ENCODE measurements at regions of chr2 and their contacts with region 1.

Region 1: GRCh38 chr2:60998628-60999545 is 18.6 kb upstream of the PEX13 start:
- DNase-seq: peak; percentile 79
- ATAC-seq: peak; percentile 69
- H3K4me3 ChIP-seq: no peak overlapping the region
- H3K4me3 Mint-ChIP-seq: no peak overlapping the region
- H3K27ac ChIP-seq: no peak overlapping the region
- H3K27ac Mint-ChIP-seq: peak overlapping the region; percentile 65
- H3K4me1 ChIP-seq: peaks cover 31 to 34% of the 10 kb centered on the region in 2 donors
- H3K4me1 Mint-ChIP-seq: peaks cover 42% of the 10 kb centered on the region
- H3K27me3 ChIP-seq: no peaks in the 10 kb centered on the region
- H3K27me3 Mint-ChIP-seq: no peaks in the 10 kb centered on the region
- CTCF ChIP-seq: peak; percentile 89

Region 2: GRCh38 chr2:60794277-60794863 is 204.5 kb before region 1 on chr2:
- CTCF ChIA-PET with region 1: interaction called, 60 read pairs
- POLR2A ChIA-PET with region 1: interaction called, 3 read pairs
- intact Hi-C with region 1: loop called (anchors 1 kb)
- DNase-seq: peak; percentile 66
- ATAC-seq: no peak
- H3K4me3 ChIP-seq: no peak overlapping the region
- H3K4me3 Mint-ChIP-seq: no peak overlapping the region
- H3K27ac ChIP-seq: peak overlapping the region in 1 of 2 donors; percentile 23
- H3K27ac Mint-ChIP-seq: no peak overlapping the region
- H3K4me1 ChIP-seq: peaks cover 15 to 20% of the 10 kb centered on the region in 2 donors
- H3K4me1 Mint-ChIP-seq: peaks cover 28% of the 10 kb centered on the region
- H3K27me3 ChIP-seq: no peaks in the 10 kb centered on the region
- H3K27me3 Mint-ChIP-seq: no peaks in the 10 kb centered on the region
- CTCF ChIP-seq: peak; percentile 84

Region 3: GRCh38 chr2:60891180-60891579 is 107.7 kb before region 1 on chr2:
- CTCF ChIA-PET with region 1: interaction called, 10 read pairs
- POLR2A ChIA-PET with region 1: no interaction called
- intact Hi-C with region 1: no loop called
- DNase-seq: no peak
- ATAC-seq: no peak
- H3K4me3 ChIP-seq: no peak overlapping the region
- H3K4me3 Mint-ChIP-seq: no peak overlapping the region
- H3K27ac ChIP-seq: peak overlapping the region in 1 of 2 donors; percentile 33
- H3K27ac Mint-ChIP-seq: no peak overlapping the region
- H3K4me1 ChIP-seq: peaks cover 26 to 53% of the 10 kb centered on the region in 2 donors
- H3K4me1 Mint-ChIP-seq: peaks cover 50% of the 10 kb centered on the region
- H3K27me3 ChIP-seq: no peaks in the 10 kb centered on the region
- H3K27me3 Mint-ChIP-seq: no peaks in the 10 kb centered on the region
- CTCF ChIP-seq: no peak

Region 4: GRCh38 chr2:60926737-60927552 is 71.9 kb before region 1 on chr2:
- CTCF ChIA-PET with region 1: interaction called, 27 read pairs
- POLR2A ChIA-PET with region 1: interaction called, 4 read pairs
- intact Hi-C with region 1: loop called (anchors 1 kb)
- DNase-seq: peak; percentile 60
- ATAC-seq: peak; percentile 39
- H3K4me3 ChIP-seq: no peak overlapping the region
- H3K4me3 Mint-ChIP-seq: peak overlapping the region; percentile 1
- H3K27ac ChIP-seq: peak overlapping the region; percentile 32 to 75
- H3K27ac Mint-ChIP-seq: peak overlapping the region; percentile 55
- H3K4me1 ChIP-seq: peaks cover 17 to 19% of the 10 kb centered on the region in 2 donors
- H3K4me1 Mint-ChIP-seq: peaks cover 30% of the 10 kb centered on the region
- H3K27me3 ChIP-seq: no peaks in the 10 kb centered on the region
- H3K27me3 Mint-ChIP-seq: no peaks in the 10 kb centered on the region
- CTCF ChIP-seq: no peak

Region 5: DNA sequence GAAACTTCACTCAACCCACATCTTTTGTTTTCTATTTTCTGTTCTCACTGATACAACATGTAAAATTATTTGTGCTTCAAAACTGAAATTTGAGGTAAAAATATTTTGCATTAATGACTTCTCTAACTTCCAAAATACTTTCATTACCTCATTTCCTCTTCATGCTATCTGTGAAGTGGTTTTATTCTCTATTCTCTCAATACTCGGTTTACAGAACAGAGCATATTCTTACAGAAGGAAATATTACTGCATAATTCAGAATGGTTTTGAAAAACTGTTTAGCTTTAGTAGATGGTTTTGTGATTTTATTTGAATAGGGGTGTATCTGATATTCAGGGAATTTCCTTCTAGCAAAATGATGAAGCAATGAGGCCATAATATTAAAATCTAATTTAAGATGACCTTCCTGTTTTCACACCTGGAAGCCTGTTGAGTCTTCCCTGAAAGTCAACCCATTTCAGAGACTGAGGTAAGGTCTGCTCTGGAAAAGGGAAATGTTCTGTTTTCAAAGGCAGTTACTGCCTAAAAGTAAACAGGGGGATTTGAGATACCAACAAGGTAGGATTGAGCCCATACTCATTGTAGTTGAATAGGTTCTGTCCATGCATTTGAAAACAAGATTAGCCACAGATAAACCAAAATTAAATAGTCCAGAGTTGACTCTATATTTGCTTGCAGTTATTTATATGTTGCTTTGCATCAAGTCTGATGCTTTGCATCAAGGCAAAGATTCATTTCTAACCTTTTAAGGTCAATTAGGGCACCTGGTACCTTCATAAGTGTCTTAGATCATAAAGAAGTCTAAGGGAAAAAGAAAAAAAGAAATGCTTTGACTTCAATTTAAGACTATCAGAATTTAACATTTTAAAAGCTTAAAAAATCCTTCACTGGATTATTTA is 32.1 kb before region 1 on chr2:
- CTCF ChIA-PET with region 1: interaction called, 52 read pairs
- POLR2A ChIA-PET with region 1: interaction called, 24 read pairs
- intact Hi-C with region 1: loop called (anchors 5 kb)
- DNase-seq: peak; percentile 65
- ATAC-seq: peak; percentile 54
- H3K4me3 ChIP-seq: peak overlapping the region in 4 of 5 experiments; percentile 13 to 52 (median 40)
- H3K4me3 Mint-ChIP-seq: peak overlapping the region; percentile 85
- H3K27ac ChIP-seq: peak overlapping the region; percentile 82 to 85
- H3K27ac Mint-ChIP-seq: peak overlapping the region; percentile 92
- H3K4me1 ChIP-seq: peaks cover 59 to 66% of the 10 kb centered on the region in 2 donors
- H3K4me1 Mint-ChIP-seq: peaks cover 73% of the 10 kb centered on the region
- H3K27me3 ChIP-seq: no peaks in the 10 kb centered on the region
- H3K27me3 Mint-ChIP-seq: no peaks in the 10 kb centered on the region
- CTCF ChIP-seq: no peak

Region 6: GRCh38 chr2:61165946-61166345 is 167.1 kb after region 1 on chr2:
- CTCF ChIA-PET with region 1: no interaction called
- POLR2A ChIA-PET with region 1: no interaction called
- intact Hi-C with region 1: no loop called
- DNase-seq: no peak
- ATAC-seq: no peak
- H3K4me3 ChIP-seq: no peak overlapping the region
- H3K4me3 Mint-ChIP-seq: no peak overlapping the region
- H3K27ac ChIP-seq: no peak overlapping the region
- H3K27ac Mint-ChIP-seq: no peak overlapping the region
- H3K4me1 ChIP-seq: no peaks in the 10 kb centered on the region
- H3K4me1 Mint-ChIP-seq: peaks cover 2% of the 10 kb centered on the region
- H3K27me3 ChIP-seq: no peaks in the 10 kb centered on the region
- H3K27me3 Mint-ChIP-seq: no peaks in the 10 kb centered on the region
- CTCF ChIP-seq: no peak

Region 7: GRCh38 chr2:61597300-61598289 is 598.7 kb after region 1 on chr2:
- CTCF ChIA-PET with region 1: no interaction called
- POLR2A ChIA-PET with region 1: no interaction called
- intact Hi-C with region 1: no loop called
- DNase-seq: no peak
- ATAC-seq: no peak
- H3K4me3 ChIP-seq: no peak overlapping the region
- H3K4me3 Mint-ChIP-seq: no peak overlapping the region
- H3K27ac ChIP-seq: no peak overlapping the region
- H3K27ac Mint-ChIP-seq: no peak overlapping the region
- H3K4me1 ChIP-seq: no peaks in the 10 kb centered on the region
- H3K4me1 Mint-ChIP-seq: no peaks in the 10 kb centered on the region
- H3K27me3 ChIP-seq: no peaks in the 10 kb centered on the region
- H3K27me3 Mint-ChIP-seq: peaks cover 14% of the 10 kb centered on the region
- CTCF ChIP-seq: no peak

Measured in B cell (primary cell).